Right ventricle myocardium inferior (tissue), 1 donor: ENCODE measurements at regions of chr7 and their contacts with region 1.

Region 1: DNA sequence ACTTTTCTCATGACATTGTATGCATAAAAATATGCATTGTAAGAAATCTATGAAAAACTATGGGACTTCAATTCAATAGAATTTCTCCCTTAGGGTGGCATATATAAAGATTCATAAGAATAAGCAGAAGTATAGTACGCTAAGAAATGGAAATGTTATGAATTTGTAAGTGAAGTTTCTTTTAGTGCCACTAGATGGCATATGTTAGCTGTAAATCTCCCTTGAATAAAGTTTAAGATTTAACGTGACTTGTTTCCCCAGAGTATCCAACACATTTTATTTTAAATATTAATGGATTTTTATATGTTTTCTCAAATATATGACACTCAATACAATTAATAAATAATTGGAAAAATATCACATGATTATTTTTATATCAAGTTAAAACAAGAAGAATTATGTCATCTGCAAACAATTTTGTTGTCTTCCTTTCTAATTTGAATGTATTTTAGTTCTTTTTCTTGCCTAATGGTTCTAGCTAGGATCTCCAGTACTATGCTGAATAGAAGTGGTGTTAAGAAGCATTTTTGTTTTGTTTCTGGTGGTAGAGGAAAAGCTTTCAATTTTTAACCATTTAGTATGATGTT is 287.2 kb downstream of the HGF start:
- DNase-seq: no peak
- ATAC-seq: no peak

Region 2: GRCh38 chr7:82017334-82017943 is 534.7 kb after region 1 on chr7:
- intact Hi-C with region 1: loop called (anchors 5 kb)
- DNase-seq: no peak
- ATAC-seq: no peak

Region 3: GRCh38 chr7:82729172-82730030 is 1246.7 kb after region 1 on chr7:
- intact Hi-C with region 1: loop called (anchors 5 kb)
- DNase-seq: no peak
- ATAC-seq: no peak